ENCODE measurements at regions of chr3 and their contacts with region 1.

Region 1: DNA sequence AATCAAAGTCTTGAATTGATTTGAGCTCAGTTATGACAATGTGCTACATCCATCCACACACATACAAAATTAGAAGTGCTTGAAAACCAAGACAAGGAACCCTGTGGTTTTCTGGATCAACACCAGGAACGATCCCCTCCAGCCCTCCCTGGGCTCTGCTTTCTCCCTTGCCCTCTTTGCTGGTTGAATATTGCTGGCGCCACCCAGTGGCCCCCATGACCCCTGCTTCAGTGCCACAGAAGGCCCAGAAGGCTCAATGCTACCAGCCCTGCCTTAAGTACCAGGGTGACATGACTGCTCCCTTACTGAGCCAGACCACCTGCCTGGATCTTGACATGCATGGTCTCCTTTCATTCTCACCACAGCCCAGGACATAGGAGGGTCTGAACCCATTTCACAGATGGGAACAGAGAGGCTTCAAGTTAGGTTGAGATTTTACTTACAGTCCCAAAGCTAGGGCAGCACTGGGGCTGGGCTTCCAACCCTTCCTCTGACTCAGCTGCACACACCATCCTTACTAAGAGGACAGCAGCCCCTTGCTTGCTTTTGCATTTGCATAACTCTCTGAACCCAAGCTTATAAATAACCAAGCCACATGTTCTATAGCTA is 15.0 kb downstream of the IL12A start:
- H3K4me3 ChIP-seq: no peak overlapping the region
- H3K27ac ChIP-seq: no peak overlapping the region
- H3K4me1 ChIP-seq: no peaks in the 10 kb centered on the region
- CTCF ChIP-seq: peak; percentile 46; the same call in 1 of the 2 replicates

Region 2: GRCh38 chr3:159260049-159260662 is 743.5 kb before region 1 on chr3:
- CTCF ChIA-PET with region 1: interaction called, 39 read pairs
- POLR2A ChIA-PET with region 1: no interaction called
- H3K4me3 ChIP-seq: no peak overlapping the region
- H3K27ac ChIP-seq: no peak overlapping the region
- H3K4me1 ChIP-seq: no peaks in the 10 kb centered on the region; the same call in 1 of the 2 replicates
- CTCF ChIP-seq: peak; percentile 40; the same call in 1 of the 2 replicates

Region 3: GRCh38 chr3:159818399-159818798 is 185.2 kb before region 1 on chr3:
- CTCF ChIA-PET with region 1: interaction called, 14 read pairs
- POLR2A ChIA-PET with region 1: no interaction called
- H3K4me3 ChIP-seq: no peak overlapping the region
- H3K27ac ChIP-seq: no peak overlapping the region
- H3K4me1 ChIP-seq: peaks cover 8% of the 10 kb centered on the region
- CTCF ChIP-seq: peak; percentile 16; the same call in 1 of the 2 replicates

Region 4: GRCh38 chr3:159872374-159873109 is 131.1 kb before region 1 on chr3:
- CTCF ChIA-PET with region 1: interaction called, 10 read pairs
- POLR2A ChIA-PET with region 1: no interaction called
- H3K4me3 ChIP-seq: no peak overlapping the region
- H3K27ac ChIP-seq: no peak overlapping the region
- H3K4me1 ChIP-seq: peaks cover 9% of the 10 kb centered on the region
- CTCF ChIP-seq: no peak

Region 5: DNA sequence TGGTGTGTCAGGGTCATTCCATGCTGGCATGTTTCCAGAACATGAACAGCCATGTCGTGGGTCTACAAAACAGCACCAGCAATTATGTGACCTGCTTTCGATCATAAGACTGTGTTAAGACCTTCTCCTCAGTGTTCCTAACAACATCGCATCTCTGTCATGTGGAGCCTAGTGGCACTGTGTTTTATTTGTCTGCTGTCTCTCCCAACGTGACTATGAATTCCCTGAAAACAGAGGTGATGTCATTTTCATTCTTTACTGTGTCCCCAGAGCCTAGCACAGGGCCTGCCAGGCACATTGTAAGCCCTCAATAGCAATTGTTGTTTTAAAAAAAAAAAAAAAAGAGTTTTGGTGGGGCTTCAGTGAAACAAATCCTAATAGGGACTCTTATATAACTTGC is 109.2 kb before region 1 on chr3:
- CTCF ChIA-PET with region 1: interaction called, 108 read pairs
- POLR2A ChIA-PET with region 1: no interaction called
- H3K4me3 ChIP-seq: no peak overlapping the region
- H3K27ac ChIP-seq: no peak overlapping the region
- H3K4me1 ChIP-seq: peaks cover 9% of the 10 kb centered on the region
- CTCF ChIP-seq: no peak

Region 6: DNA sequence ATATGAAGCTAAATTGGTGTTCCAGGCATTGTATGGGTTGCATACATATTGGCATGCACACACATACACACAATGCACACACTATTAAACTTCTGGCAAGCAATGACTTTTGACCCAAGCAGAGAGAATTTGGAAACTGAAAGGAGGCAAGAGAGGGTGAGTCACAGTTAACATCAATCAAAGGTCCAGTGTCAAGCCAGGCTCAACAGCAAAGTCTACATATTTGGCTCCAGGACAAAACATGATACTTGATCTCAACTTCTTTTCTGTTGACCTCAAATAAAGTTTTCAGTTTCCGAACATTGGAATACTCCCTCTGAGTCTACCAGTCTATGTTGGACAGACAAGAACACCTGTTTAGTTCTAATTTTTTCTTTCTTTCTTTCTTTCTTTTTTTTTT is 13.3 kb after region 1 on chr3:
- CTCF ChIA-PET with region 1: interaction called, 18 read pairs
- POLR2A ChIA-PET with region 1: no interaction called
- H3K4me3 ChIP-seq: no peak overlapping the region
- H3K27ac ChIP-seq: no peak overlapping the region
- H3K4me1 ChIP-seq: no peaks in the 10 kb centered on the region
- CTCF ChIP-seq: no peak